Caco-2 (cell line): ENCODE measurements at regions of chr12 and their contacts with region 1.

Region 1: GRCh38 chr12:122500685-122501488 is at the start of gene ZCCHC8:
- DNase-seq: peak; percentile 98
- H3K4me3 ChIP-seq: peak within 1 kb of the TSS; percentile 74
- H3K4me3 Mint-ChIP-seq: peak within 1 kb of the TSS; percentile 95
- H3K27ac Mint-ChIP-seq: peak within 1 kb of the TSS; percentile 99
- H3K4me1 ChIP-seq: 0 out of 2 replicates have a peak, but pooled peaks cover 8% of the 10 kb centered on the region
- H3K4me1 Mint-ChIP-seq: peaks cover 6% of the 10 kb centered on the region
- H3K27me3 ChIP-seq: no peaks in the 10 kb centered on the region
- H3K27me3 Mint-ChIP-seq: no peaks in the 10 kb centered on the region
- CTCF ChIP-seq: peak in 1 of 2 experiments; percentile 18
- total RNA-seq, gene ZCCHC8: 37.5 and 40.1 TPM in 2 replicates

Region 2: GRCh38 chr12:122486805-122487426 is 14.0 kb before region 1 on chr12:
- CTCF ChIA-PET with region 1: interaction called, 5 read pairs
- POLR2A ChIA-PET with region 1: interaction called, 20 read pairs
- intact Hi-C with region 1: no loop called
- DNase-seq: no peak
- H3K4me3 ChIP-seq: no peak overlapping the region
- H3K4me3 Mint-ChIP-seq: no peak overlapping the region
- H3K27ac Mint-ChIP-seq: no peak overlapping the region
- H3K4me1 ChIP-seq: peaks cover 19% of the 10 kb centered on the region
- H3K4me1 Mint-ChIP-seq: peaks cover 18% of the 10 kb centered on the region
- H3K27me3 ChIP-seq: no peaks in the 10 kb centered on the region
- H3K27me3 Mint-ChIP-seq: no peaks in the 10 kb centered on the region
- CTCF ChIP-seq: no peak

Region 3: GRCh38 chr12:122526683-122527477 is 26.0 kb after region 1 on chr12 and contains the starts of genes KNTC1 and RSRC2:
- CTCF ChIA-PET with region 1: interaction called, 4 read pairs
- POLR2A ChIA-PET with region 1: interaction called, 48 read pairs
- intact Hi-C with region 1: loop called (anchors 1 kb)
- DNase-seq: peak; percentile 98 to 100
- H3K4me3 ChIP-seq: peak within 1 kb of the TSS; percentile 88
- H3K4me3 Mint-ChIP-seq: no peak within 1 kb of the TSS
- H3K27ac Mint-ChIP-seq: no peak within 1 kb of the TSS
- H3K4me1 ChIP-seq: peaks cover 20% of the 10 kb centered on the region
- H3K4me1 Mint-ChIP-seq: peaks cover 8% of the 10 kb centered on the region
- H3K27me3 ChIP-seq: no peaks in the 10 kb centered on the region
- H3K27me3 Mint-ChIP-seq: no peaks in the 10 kb centered on the region
- CTCF ChIP-seq: no peak
- total RNA-seq, gene KNTC1: 55.8 and 57.0 TPM in 2 replicates
- total RNA-seq, gene RSRC2: 77.9 and 79.0 TPM in 2 replicates